ENCODE measurements at regions of chr12 and their contacts with region 1.

Region 1: GRCh38 chr12:40921563-40922163 is 229.4 kb downstream of the CNTN1 start:
- DNase-seq: no peak
- H3K4me3 Mint-ChIP-seq: no peak overlapping the region
- H3K27ac Mint-ChIP-seq: no peak overlapping the region
- H3K4me1 Mint-ChIP-seq: no peaks in the 10 kb centered on the region
- H3K27me3 Mint-ChIP-seq: peaks cover 2% of the 10 kb centered on the region

Region 2: DNA sequence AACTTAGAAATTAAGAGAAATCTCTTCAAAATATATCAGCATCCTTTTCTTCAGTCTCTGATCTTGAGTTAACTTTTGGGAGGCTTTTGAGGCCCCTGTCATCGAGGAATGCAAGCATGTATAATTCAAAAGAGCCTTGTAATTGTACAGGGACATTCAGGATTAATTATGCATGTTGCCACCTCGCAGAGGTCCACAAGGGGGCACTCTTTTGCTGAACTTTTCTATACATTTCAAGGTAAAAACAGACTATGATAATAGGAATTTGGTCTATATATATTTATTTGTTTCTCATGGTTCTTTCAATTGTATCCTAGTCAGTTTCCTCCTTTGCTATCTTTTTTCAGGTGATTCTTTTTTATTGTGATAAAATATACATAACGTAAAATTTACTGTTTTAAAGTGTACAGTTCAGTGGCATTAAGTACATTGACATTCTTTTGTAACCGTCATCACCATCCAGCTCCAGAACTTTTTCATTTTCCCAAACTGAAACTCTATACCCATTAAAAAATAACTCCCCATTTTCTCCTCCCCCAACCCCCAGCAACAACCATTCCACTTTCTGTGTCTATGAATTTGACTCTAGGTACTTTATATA is 768.8 kb before region 1 on chr12:
- CTCF ChIA-PET with region 1: no interaction called
- POLR2A ChIA-PET with region 1: no interaction called
- intact Hi-C with region 1: loop called (anchors 2 kb)
- DNase-seq: peak; percentile 60
- H3K4me3 Mint-ChIP-seq: no peak overlapping the region
- H3K27ac Mint-ChIP-seq: no peak overlapping the region
- H3K4me1 Mint-ChIP-seq: no peaks in the 10 kb centered on the region
- H3K27me3 Mint-ChIP-seq: peaks cover 18% of the 10 kb centered on the region

Region 3: DNA sequence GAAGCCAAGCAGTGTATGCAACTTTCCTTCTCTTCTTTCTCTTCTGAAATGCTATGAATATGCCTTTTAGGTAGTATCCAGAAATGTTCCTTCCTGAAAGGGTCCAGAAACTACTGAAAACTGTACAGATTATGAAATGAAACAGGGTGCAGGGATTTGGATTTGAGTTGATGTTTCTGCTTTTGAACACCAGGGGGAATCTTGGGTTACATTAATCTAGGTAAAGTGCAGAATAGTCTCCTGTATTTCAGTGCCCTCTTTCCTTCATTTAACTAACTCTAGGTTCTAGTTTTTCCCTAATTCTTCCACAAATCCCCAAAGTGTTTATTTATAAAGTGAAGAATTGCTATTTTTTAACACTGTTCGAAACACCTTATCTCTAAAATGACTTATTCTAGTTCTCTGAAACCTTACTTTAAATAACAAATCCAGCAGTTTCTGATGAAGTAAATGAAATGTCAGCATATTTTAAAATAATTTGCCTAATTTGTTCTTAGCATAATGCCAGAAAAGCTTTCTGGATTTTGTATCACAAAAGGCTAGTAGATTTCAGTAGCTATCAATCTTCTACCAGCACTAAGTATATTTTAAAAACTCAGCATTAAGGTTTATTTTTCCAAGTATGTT is 585.0 kb before region 1 on chr12:
- CTCF ChIA-PET with region 1: interaction called, 4 read pairs
- POLR2A ChIA-PET with region 1: no interaction called
- intact Hi-C with region 1: loop called (anchors 10 kb)
- DNase-seq: no peak
- H3K4me3 Mint-ChIP-seq: no peak overlapping the region
- H3K27ac Mint-ChIP-seq: no peak overlapping the region
- H3K4me1 Mint-ChIP-seq: no peaks in the 10 kb centered on the region
- H3K27me3 Mint-ChIP-seq: no peaks in the 10 kb centered on the region

Region 4: GRCh38 chr12:40622246-40622838 is 299.3 kb before region 1 on chr12:
- CTCF ChIA-PET with region 1: interaction called, 4 read pairs
- POLR2A ChIA-PET with region 1: no interaction called
- intact Hi-C with region 1: loop called (anchors 1 kb)
- DNase-seq: peak; percentile 31
- H3K4me3 Mint-ChIP-seq: no peak overlapping the region
- H3K27ac Mint-ChIP-seq: no peak overlapping the region
- H3K4me1 Mint-ChIP-seq: no peaks in the 10 kb centered on the region
- H3K27me3 Mint-ChIP-seq: no peaks in the 10 kb centered on the region